ENCODE measurements at regions of chr21 and their contacts with region 1.

Region 1: DNA sequence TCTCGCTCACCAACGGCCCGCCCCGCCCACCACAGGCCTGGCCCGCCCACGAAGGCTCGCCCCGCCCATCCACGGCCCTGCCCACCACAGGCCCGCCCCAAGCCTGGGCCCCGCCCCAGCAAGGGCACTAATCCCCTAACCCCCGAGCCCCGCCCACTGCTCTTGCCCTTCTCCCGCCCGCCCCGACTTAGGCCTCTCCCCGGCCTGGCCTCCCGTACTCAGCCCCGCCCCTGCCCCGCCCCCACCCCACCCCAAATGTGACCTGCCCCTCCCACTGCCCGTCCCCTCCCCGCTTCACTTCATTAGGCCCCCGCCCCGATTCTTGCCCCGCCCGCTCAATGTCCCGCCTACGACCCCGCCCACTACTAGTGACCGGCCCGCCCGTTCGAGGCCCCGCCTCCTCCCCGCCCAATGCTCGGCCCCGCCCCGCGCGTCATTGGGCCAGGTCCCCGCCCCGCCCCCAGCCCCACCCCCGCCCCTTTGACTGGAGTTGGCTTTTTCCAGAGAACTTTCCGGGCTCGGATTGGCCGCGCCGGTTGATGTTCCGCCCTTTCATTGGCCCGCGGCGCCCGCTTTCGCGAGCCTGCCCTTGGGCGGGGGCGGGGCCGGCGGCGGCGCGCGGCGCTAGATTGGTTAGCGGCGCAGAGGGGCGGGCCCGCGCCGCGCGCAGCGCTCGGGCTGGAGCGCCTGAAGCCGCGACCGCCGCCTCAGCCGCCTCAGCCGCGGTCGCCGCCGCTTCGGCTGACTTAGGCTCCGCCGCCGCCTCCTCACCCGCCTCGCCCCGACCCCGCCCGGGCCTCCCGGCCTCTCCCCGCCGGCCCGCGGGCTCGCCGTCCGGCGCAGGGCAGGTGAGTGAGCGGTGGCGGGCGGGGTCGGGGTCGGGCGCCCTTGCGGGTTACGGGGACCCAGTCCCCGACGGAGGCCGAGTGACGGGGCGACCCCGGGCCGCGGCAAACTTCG is at the start of gene PCBP3:
- DNase-seq: peak; percentile 99
- H3K4me3 Mint-ChIP-seq: peak within 1 kb of the TSS; percentile 76
- H3K27ac Mint-ChIP-seq: no peak within 1 kb of the TSS
- H3K4me1 Mint-ChIP-seq: peaks cover 46% of the 10 kb centered on the region
- H3K27me3 Mint-ChIP-seq: peaks cover 5% of the 10 kb centered on the region
- total RNA-seq, gene PCBP3: 10.0 to 10.2 TPM

Region 2: DNA sequence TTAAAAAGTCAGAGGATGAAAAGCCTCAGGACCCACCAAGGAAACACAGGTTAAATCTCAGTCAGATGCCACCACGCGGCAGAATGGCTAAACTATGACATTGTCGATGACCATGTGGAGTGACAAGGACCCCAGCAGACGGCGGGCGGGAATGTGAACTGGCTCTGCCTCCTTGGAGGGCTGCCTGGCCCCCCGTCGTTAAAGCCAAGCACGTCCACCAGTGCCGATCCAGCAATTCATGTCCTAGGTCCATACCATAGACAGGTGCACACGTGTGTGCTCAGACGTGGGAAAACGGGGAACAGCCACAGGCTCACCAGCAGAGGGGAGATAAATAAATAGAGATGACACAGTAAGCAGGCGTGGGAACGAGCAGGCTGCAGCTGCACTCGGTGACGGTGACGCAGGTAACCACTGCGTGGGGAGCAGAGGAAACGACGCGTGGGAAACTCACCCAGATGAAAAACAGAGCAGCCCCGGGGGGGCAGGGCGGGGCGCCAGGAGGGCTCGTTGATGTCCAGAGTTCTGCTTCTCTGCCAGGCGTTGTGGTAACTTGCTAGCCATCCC is 28.1 kb before region 1 on chr21:
- CTCF ChIA-PET with region 1: no interaction called
- intact Hi-C with region 1: loop called (anchors 1 kb)
- DNase-seq: peak; percentile 88
- H3K4me3 Mint-ChIP-seq: peak overlapping the region; percentile 58
- H3K27ac Mint-ChIP-seq: no peak overlapping the region
- H3K4me1 Mint-ChIP-seq: peaks cover 31% of the 10 kb centered on the region
- H3K27me3 Mint-ChIP-seq: no peaks in the 10 kb centered on the region

Region 3: DNA sequence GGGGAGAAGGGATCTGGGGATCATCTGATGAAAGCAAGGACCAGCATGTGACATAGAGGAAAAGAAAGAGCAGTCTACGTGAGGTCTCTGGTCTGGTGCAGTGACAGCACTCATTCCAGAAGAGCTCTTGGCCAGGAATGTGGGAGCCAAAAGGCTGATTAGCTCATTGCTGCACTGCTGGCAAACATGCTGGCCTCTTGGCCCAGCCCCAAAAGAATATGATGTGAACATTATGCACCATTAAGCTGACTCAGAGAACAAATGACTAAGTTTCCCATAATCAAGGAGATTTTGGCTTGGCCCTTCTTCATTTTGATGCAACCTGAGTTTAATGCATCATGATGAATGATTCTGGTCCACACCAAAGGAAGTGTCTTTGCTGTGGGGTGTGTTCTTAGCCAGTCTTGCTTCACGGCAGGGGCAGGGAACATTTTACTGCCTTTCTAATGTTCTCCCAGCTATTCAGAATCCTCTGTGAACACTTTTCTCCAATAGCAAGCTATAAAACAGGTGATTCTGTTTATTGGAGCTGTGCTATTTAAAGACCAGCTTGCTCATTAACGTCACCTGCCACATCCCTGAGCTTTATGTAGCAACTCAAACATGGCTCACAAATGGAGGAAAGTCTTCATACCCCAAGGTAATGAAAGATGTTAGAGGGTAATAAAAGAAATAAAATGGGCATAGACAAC is 55.3 kb after region 1 on chr21:
- CTCF ChIA-PET with region 1: no interaction called
- intact Hi-C with region 1: loop called (anchors 1 kb)
- DNase-seq: peak; percentile 56
- H3K4me3 Mint-ChIP-seq: no peak overlapping the region
- H3K27ac Mint-ChIP-seq: peak overlapping the region; percentile 79
- H3K4me1 Mint-ChIP-seq: peaks cover 38% of the 10 kb centered on the region
- H3K27me3 Mint-ChIP-seq: no peaks in the 10 kb centered on the region

Region 4: GRCh38 chr21:45894443-45894810 is 251.1 kb after region 1 on chr21:
- CTCF ChIA-PET with region 1: no interaction called
- intact Hi-C with region 1: no loop called
- DNase-seq: no peak
- H3K4me3 Mint-ChIP-seq: no peak overlapping the region
- H3K27ac Mint-ChIP-seq: no peak overlapping the region
- H3K4me1 Mint-ChIP-seq: peaks cover 40% of the 10 kb centered on the region
- H3K27me3 Mint-ChIP-seq: no peaks in the 10 kb centered on the region